ENCODE measurements at regions of chr3 and their contacts with region 1.

Region 1: GRCh38 chr3:169149349-169149890 is 514.1 kb downstream of the MECOM start:
- DNase-seq: peak; percentile 83 to 94 (median 89)
- ATAC-seq: peak; percentile 85
- H3K4me3 ChIP-seq: peak overlapping the region; percentile 5 to 28
- H3K27ac ChIP-seq: peak overlapping the region; percentile 71 to 76
- H3K4me1 ChIP-seq: peaks cover 3 to 54% of the 10 kb centered on the region in 2 donors
- H3K27me3 ChIP-seq: peaks cover 0 to 59% of the 10 kb centered on the region in 2 donors
- CTCF ChIP-seq: peak; percentile 78 to 81

Region 2: GRCh38 chr3:169454823-169455222 is 305.4 kb after region 1 on chr3:
- intact Hi-C with region 1: no loop called
- DNase-seq: no peak
- ATAC-seq: peak; percentile 42
- H3K4me3 ChIP-seq: no peak overlapping the region
- H3K27ac ChIP-seq: no peak overlapping the region
- H3K4me1 ChIP-seq: no peaks in the 10 kb centered on the region
- H3K27me3 ChIP-seq: no peaks in the 10 kb centered on the region
- CTCF ChIP-seq: no peak

Region 3: GRCh38 chr3:169668957-169669681 is 519.7 kb after region 1 on chr3:
- intact Hi-C with region 1: loop called (anchors 5 to 10 kb)
- DNase-seq: peak; percentile 80 to 93 (median 85)
- ATAC-seq: peak; percentile 89
- H3K4me3 ChIP-seq: peak overlapping the region; percentile 24 to 36
- H3K27ac ChIP-seq: peak overlapping the region; percentile 77 to 81
- H3K4me1 ChIP-seq: peaks cover 0 to 21% of the 10 kb centered on the region in 2 donors
- H3K27me3 ChIP-seq: peaks cover 50 to 88% of the 10 kb centered on the region in 2 donors
- CTCF ChIP-seq: peak; percentile 60 to 69